CD4-positive, alpha-beta memory T cell (primary cell): ENCODE measurements at regions of chr2 and their contacts with region 1.

Region 1: DNA sequence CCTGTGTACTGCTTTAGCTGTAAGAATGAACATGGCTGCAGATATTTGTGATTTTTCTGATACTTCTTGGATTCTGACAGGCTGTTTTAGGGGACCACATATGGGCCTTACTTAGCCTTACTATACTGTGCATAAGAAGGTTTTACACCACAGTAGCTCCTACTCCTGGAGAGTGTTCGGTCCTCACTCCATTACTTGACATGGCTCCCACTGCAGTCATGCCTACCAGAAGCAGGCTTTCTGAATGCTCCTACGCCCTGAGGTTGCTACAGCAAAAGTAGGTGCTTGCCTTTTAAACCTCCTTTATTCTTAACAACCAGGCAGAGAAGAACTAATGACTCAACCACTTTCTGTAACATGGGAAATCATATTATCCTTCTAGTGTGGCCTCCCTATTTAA is 125.2 kb upstream of the MAP2 start:
- DNase-seq: no peak
- H3K4me3 ChIP-seq: no peak overlapping the region
- H3K4me3 Mint-ChIP-seq: no peak overlapping the region
- H3K27ac ChIP-seq: no peak overlapping the region
- H3K27ac Mint-ChIP-seq: no peak overlapping the region
- H3K4me1 ChIP-seq: no peaks in the 10 kb centered on the region
- H3K4me1 Mint-ChIP-seq: no peaks in the 10 kb centered on the region
- H3K27me3 ChIP-seq: no peaks in the 10 kb centered on the region
- H3K27me3 Mint-ChIP-seq: no peaks in the 10 kb centered on the region

Region 2: DNA sequence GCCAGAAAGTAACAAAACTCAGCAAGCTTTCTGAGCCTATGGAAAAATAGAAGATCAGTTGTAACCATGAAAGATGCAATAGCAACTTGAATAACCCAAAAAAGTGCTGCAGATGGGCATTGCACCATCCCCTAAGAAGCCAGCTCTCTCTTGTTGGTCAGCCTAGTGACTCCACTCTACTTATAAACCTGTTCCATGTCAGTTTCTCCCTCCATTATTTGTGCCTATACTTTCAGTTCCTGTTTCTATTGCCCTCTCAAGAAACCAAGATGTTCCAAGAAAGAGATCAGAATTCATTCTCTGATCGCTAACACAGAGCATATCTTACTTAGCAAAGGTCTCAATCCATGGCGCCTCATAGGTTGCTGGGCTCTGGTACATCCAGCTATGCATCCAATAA is 45.1 kb before region 1 on chr2:
- CTCF ChIA-PET with region 1: no interaction called
- POLR2A ChIA-PET with region 1: no interaction called
- intact Hi-C with region 1: loop called (anchors 5 kb)
- DNase-seq: no peak
- H3K4me3 ChIP-seq: no peak overlapping the region
- H3K4me3 Mint-ChIP-seq: no peak overlapping the region
- H3K27ac ChIP-seq: no peak overlapping the region
- H3K27ac Mint-ChIP-seq: no peak overlapping the region
- H3K4me1 ChIP-seq: no peaks in the 10 kb centered on the region
- H3K4me1 Mint-ChIP-seq: no peaks in the 10 kb centered on the region
- H3K27me3 ChIP-seq: no peaks in the 10 kb centered on the region
- H3K27me3 Mint-ChIP-seq: no peaks in the 10 kb centered on the region

Region 3: GRCh38 chr2:209314653-209315052 is 16.1 kb after region 1 on chr2:
- CTCF ChIA-PET with region 1: no interaction called
- POLR2A ChIA-PET with region 1: no interaction called
- intact Hi-C with region 1: no loop called
- DNase-seq: no peak
- H3K4me3 ChIP-seq: no peak overlapping the region
- H3K4me3 Mint-ChIP-seq: no peak overlapping the region
- H3K27ac ChIP-seq: no peak overlapping the region
- H3K27ac Mint-ChIP-seq: no peak overlapping the region
- H3K4me1 ChIP-seq: no peaks in the 10 kb centered on the region
- H3K4me1 Mint-ChIP-seq: no peaks in the 10 kb centered on the region
- H3K27me3 ChIP-seq: no peaks in the 10 kb centered on the region
- H3K27me3 Mint-ChIP-seq: no peaks in the 10 kb centered on the region